B cell (primary cell): ENCODE measurements at regions of chr6 and their contacts with region 1.

Region 1: GRCh38 chr6:15299430-15300131 is 53.7 kb downstream of the JARID2 start:
- DNase-seq: peak; percentile 80
- ATAC-seq: peak; percentile 95
- H3K4me3 ChIP-seq: peak overlapping the region in 2 of 5 experiments; percentile 9 to 31
- H3K4me3 Mint-ChIP-seq: peak overlapping the region; percentile 48
- H3K27ac ChIP-seq: peak overlapping the region; percentile 14 to 76
- H3K27ac Mint-ChIP-seq: peak overlapping the region; percentile 66
- H3K4me1 ChIP-seq: peaks cover 60 to 61% of the 10 kb centered on the region in 2 donors
- H3K4me1 Mint-ChIP-seq: peaks cover 76% of the 10 kb centered on the region
- H3K27me3 ChIP-seq: no peaks in the 10 kb centered on the region
- H3K27me3 Mint-ChIP-seq: no peaks in the 10 kb centered on the region
- CTCF ChIP-seq: no peak

Region 2: GRCh38 chr6:15254070-15254841 is 45.3 kb before region 1 on chr6:
- CTCF ChIA-PET with region 1: no interaction called
- POLR2A ChIA-PET with region 1: no interaction called
- intact Hi-C with region 1: loop called (anchors 2 kb)
- DNase-seq: peak; percentile 79
- ATAC-seq: peak; percentile 73
- H3K4me3 ChIP-seq: peak overlapping the region in 1 of 5 experiments; percentile 27
- H3K4me3 Mint-ChIP-seq: peak overlapping the region; percentile 65
- H3K27ac ChIP-seq: peak overlapping the region; percentile 77 to 80
- H3K27ac Mint-ChIP-seq: peak overlapping the region; percentile 84
- H3K4me1 ChIP-seq: peaks cover 64 to 81% of the 10 kb centered on the region in 2 donors
- H3K4me1 Mint-ChIP-seq: peaks cover 92% of the 10 kb centered on the region
- H3K27me3 ChIP-seq: no peaks in the 10 kb centered on the region
- H3K27me3 Mint-ChIP-seq: no peaks in the 10 kb centered on the region
- CTCF ChIP-seq: peak; percentile 15

Region 3: GRCh38 chr6:15264902-15265761 is 34.4 kb before region 1 on chr6:
- CTCF ChIA-PET with region 1: no interaction called
- POLR2A ChIA-PET with region 1: interaction called, 3 read pairs
- intact Hi-C with region 1: loop called (anchors 5 kb)
- DNase-seq: no peak
- ATAC-seq: no peak
- H3K4me3 ChIP-seq: no peak overlapping the region
- H3K4me3 Mint-ChIP-seq: peak overlapping the region; percentile 68
- H3K27ac ChIP-seq: peak overlapping the region in 1 of 2 donors; percentile 41
- H3K27ac Mint-ChIP-seq: peak overlapping the region; percentile 56
- H3K4me1 ChIP-seq: peaks cover 74% of the 10 kb centered on the region in 2 donors
- H3K4me1 Mint-ChIP-seq: peaks cover 87% of the 10 kb centered on the region
- H3K27me3 ChIP-seq: no peaks in the 10 kb centered on the region
- H3K27me3 Mint-ChIP-seq: no peaks in the 10 kb centered on the region
- CTCF ChIP-seq: no peak

Region 4: GRCh38 chr6:15287670-15288375 is 11.8 kb before region 1 on chr6:
- CTCF ChIA-PET with region 1: no interaction called
- POLR2A ChIA-PET with region 1: no interaction called
- intact Hi-C with region 1: loop called (anchors 2 kb)
- DNase-seq: peak; percentile 73
- ATAC-seq: peak; percentile 96
- H3K4me3 ChIP-seq: no peak overlapping the region
- H3K4me3 Mint-ChIP-seq: peak overlapping the region; percentile 56
- H3K27ac ChIP-seq: peak overlapping the region in 1 of 2 donors; percentile 23
- H3K27ac Mint-ChIP-seq: peak overlapping the region; percentile 69
- H3K4me1 ChIP-seq: peaks cover 26 to 30% of the 10 kb centered on the region in 2 donors
- H3K4me1 Mint-ChIP-seq: peaks cover 50% of the 10 kb centered on the region
- H3K27me3 ChIP-seq: no peaks in the 10 kb centered on the region
- H3K27me3 Mint-ChIP-seq: no peaks in the 10 kb centered on the region
- CTCF ChIP-seq: no peak